CD8-positive, alpha-beta T cell (primary cell): ENCODE measurements at regions of chr17 and their contacts with region 1.

Region 1: DNA sequence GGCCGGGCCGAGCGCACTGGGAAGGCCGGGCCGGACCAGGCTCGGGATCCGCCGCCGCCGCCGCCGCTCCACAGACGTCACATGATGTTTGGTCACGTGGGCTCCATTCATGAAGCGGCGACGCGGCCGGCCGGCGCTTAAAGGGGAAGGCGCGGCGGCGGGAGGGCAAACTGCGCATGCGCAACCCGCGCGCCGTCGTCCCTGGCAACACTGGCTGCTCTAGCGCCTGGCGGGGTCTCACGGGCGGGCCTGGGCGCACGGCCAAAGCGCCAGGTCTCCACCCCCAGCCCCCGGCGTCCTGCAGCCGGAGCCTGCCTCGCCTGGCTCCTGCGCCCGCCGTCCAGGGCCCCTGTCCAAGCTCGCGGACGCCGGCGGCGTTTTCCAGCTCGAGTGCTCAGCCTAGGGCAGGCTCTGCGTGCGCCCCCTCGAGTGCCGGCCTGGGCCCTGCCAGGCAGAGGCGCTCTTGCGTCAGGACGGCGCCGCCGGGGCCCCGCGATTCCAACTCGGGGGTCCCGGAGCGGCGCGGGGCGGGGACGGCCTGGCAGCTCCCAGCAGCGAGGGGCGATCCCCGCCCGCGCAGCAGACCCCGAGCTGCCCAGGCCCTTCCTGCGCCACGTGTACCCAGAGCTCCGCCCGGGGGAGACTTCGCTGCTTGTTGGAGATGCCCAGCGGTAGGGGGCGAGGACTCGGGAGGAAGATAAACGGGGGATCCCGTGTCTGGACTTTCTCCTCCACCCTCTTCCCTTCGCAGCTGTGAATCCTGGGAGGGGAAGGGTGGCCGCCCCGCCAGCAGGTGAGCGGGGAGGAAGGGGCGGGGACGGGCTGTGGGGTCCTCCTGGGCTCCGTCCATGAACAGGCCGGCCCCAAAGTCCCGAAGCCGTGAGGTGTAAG is at the start of gene MAFG:
- DNase-seq: peak; percentile 72 to 96 (median 87)
- ATAC-seq: peak; percentile 69
- H3K4me3 ChIP-seq: peak within 1 kb of the TSS; percentile 43 to 59
- H3K4me3 Mint-ChIP-seq: peak within 1 kb of the TSS; percentile 76
- H3K27ac ChIP-seq: peak within 1 kb of the TSS in 1 of 2 experiments; percentile 36
- H3K27ac Mint-ChIP-seq: peak within 1 kb of the TSS; percentile 60
- H3K4me1 ChIP-seq: peaks cover 28% of the 10 kb centered on the region
- H3K4me1 Mint-ChIP-seq: peaks cover 19% of the 10 kb centered on the region
- H3K27me3 ChIP-seq: peaks cover 0 to 13% of the 10 kb centered on the region in 2 experiments
- H3K27me3 Mint-ChIP-seq: peaks cover 4% of the 10 kb centered on the region
- CTCF ChIP-seq: no peak
- total RNA-seq, gene MAFG: 8.5 to 10.5 TPM

Region 2: DNA sequence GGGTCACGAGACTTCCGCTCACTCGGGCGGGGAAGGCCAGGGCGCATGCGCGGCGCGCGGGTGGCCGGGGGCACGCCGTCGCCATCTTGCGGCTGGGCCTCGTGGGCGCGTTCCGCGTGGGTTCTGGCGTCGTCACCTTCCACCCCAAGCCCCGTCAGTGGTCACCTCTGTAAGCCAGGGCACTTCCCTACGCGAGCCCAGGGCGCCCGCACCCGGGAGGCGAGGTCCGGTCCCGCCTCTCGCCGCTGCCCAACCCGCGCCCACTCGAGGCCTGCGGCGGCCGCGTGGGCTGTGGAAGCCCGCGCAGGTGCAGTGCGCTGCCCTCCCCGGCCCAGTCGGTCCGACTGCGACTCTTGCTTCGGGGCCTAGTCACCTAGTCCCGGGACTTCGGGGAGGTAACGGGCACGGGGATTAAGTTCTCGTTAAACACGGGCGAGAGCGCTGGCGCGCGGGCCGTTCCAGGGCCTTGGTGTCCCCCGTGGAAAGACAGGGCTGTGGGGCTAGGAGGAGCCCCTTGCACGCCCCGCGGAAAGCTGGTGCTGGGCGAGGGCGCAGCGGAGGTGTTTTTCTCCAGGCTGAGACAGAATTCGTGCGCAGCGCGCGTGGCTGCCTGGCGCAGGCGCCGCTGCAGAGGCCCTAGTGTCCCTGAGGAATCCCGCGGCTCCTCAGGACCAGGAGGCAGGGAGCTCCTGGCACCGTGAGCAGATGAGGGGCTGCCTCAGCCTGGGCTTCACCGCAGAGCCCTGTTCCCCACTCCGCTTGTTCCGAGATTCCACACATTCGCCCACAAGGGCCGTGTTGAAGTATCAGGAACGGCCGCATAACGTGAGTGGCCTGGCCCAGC is 56.3 kb before region 1 on chr17:
- CTCF ChIA-PET with region 1: interaction called, 3 read pairs
- POLR2A ChIA-PET with region 1: interaction called, 4 read pairs
- intact Hi-C with region 1: loop called in 1 of 2 experiments (anchors 5 kb)
- DNase-seq: peak; percentile 90 to 97 (median 96)
- ATAC-seq: peak; percentile 29
- H3K4me3 ChIP-seq: peak overlapping the region; percentile 93 to 94
- H3K4me3 Mint-ChIP-seq: peak overlapping the region; percentile 87
- H3K27ac ChIP-seq: peak overlapping the region; percentile 96 to 98
- H3K27ac Mint-ChIP-seq: peak overlapping the region; percentile 96
- H3K4me1 ChIP-seq: peaks cover 39% of the 10 kb centered on the region
- H3K4me1 Mint-ChIP-seq: peaks cover 40% of the 10 kb centered on the region
- H3K27me3 ChIP-seq: no peaks in the 10 kb centered on the region
- H3K27me3 Mint-ChIP-seq: no peaks in the 10 kb centered on the region
- CTCF ChIP-seq: no peak

Region 3: GRCh38 chr17:81890447-81891299 is 37.2 kb before region 1 on chr17:
- CTCF ChIA-PET with region 1: no interaction called
- POLR2A ChIA-PET with region 1: interaction called, 3 read pairs
- intact Hi-C with region 1: loop called (anchors 2 kb)
- DNase-seq: peak in 3 of 9 experiments; percentile 26 to 52 (median 38)
- ATAC-seq: no peak
- H3K4me3 ChIP-seq: peak overlapping the region; percentile 51 to 53
- H3K4me3 Mint-ChIP-seq: peak overlapping the region; percentile 87
- H3K27ac ChIP-seq: peak overlapping the region; percentile 54 to 57
- H3K27ac Mint-ChIP-seq: peak overlapping the region; percentile 95
- H3K4me1 ChIP-seq: peaks cover 19% of the 10 kb centered on the region
- H3K4me1 Mint-ChIP-seq: peaks cover 23% of the 10 kb centered on the region
- H3K27me3 ChIP-seq: no peaks in the 10 kb centered on the region
- H3K27me3 Mint-ChIP-seq: no peaks in the 10 kb centered on the region
- CTCF ChIP-seq: no peak

Region 4: GRCh38 chr17:81911277-81911961 is 16.5 kb before region 1 on chr17 and contains the start of gene PCYT2:
- CTCF ChIA-PET with region 1: no interaction called
- POLR2A ChIA-PET with region 1: interaction called, 3 read pairs
- intact Hi-C with region 1: loop called in 1 of 2 experiments (anchors 1 kb)
- DNase-seq: peak; percentile 85 to 97 (median 94)
- ATAC-seq: peak; percentile 94
- H3K4me3 ChIP-seq: peak within 1 kb of the TSS; percentile 68 to 73
- H3K4me3 Mint-ChIP-seq: peak within 1 kb of the TSS; percentile 85
- H3K27ac ChIP-seq: peak within 1 kb of the TSS; percentile 31 to 37
- H3K27ac Mint-ChIP-seq: peak within 1 kb of the TSS; percentile 55
- H3K4me1 ChIP-seq: peaks cover 18% of the 10 kb centered on the region
- H3K4me1 Mint-ChIP-seq: peaks cover 20% of the 10 kb centered on the region
- H3K27me3 ChIP-seq: no peaks in the 10 kb centered on the region
- H3K27me3 Mint-ChIP-seq: no peaks in the 10 kb centered on the region
- CTCF ChIP-seq: no peak
- total RNA-seq, gene PCYT2: 18.0 to 18.1 TPM

Region 5: DNA sequence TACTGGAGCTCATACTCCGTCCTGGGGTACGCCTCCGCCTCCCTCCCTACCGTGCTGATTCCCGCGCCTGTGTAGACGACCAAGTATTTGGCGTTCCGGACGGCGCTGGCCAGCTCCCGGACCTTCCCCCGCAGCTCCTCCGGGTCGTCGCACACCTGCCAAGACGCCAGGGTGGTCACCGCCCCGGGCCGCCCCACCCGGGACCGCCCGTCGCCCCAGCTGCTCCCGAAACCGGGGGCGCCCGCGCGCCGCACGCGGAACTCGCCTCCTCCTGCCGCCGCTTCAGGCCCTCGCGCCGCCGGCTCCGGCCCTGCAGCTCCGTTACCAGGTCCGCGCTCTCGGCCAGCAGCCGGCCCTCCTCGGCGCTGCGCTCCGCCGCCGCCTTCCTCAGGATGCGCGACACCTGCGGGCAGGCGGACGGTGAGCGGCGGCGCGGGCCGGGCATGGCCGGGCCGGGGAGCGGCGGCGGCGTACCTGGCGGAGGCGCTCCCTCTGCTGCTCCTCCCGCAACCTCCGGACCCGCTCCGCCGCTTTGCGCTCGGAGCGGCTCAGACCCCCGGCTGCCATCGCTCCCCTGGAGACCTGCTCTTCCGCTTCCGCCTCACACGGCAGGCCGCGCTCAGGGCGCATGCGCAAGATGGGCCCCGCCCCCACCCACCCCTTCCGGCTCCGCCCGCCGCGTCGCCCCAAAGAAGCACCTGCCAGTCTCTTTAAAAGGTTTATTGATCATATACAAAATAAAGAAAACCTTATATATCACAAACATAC is 10.1 kb before region 1 on chr17 and contains the start of gene SIRT7:
- CTCF ChIA-PET with region 1: interaction called, 4 read pairs
- POLR2A ChIA-PET with region 1: interaction called, 10 read pairs
- intact Hi-C with region 1: loop called in 1 of 2 experiments (anchors 1 kb)
- DNase-seq: peak; percentile 67 to 92 (median 82)
- ATAC-seq: peak; percentile 93
- H3K4me3 ChIP-seq: peak within 1 kb of the TSS; percentile 63 to 69
- H3K4me3 Mint-ChIP-seq: peak within 1 kb of the TSS; percentile 91
- H3K27ac ChIP-seq: peak within 1 kb of the TSS; percentile 51 to 75
- H3K27ac Mint-ChIP-seq: peak within 1 kb of the TSS; percentile 88
- H3K4me1 ChIP-seq: peaks cover 14% of the 10 kb centered on the region
- H3K4me1 Mint-ChIP-seq: peaks cover 27% of the 10 kb centered on the region
- H3K27me3 ChIP-seq: no peaks in the 10 kb centered on the region
- H3K27me3 Mint-ChIP-seq: no peaks in the 10 kb centered on the region
- CTCF ChIP-seq: no peak
- total RNA-seq, gene SIRT7: 75.2 to 76.1 TPM

Region 6: DNA sequence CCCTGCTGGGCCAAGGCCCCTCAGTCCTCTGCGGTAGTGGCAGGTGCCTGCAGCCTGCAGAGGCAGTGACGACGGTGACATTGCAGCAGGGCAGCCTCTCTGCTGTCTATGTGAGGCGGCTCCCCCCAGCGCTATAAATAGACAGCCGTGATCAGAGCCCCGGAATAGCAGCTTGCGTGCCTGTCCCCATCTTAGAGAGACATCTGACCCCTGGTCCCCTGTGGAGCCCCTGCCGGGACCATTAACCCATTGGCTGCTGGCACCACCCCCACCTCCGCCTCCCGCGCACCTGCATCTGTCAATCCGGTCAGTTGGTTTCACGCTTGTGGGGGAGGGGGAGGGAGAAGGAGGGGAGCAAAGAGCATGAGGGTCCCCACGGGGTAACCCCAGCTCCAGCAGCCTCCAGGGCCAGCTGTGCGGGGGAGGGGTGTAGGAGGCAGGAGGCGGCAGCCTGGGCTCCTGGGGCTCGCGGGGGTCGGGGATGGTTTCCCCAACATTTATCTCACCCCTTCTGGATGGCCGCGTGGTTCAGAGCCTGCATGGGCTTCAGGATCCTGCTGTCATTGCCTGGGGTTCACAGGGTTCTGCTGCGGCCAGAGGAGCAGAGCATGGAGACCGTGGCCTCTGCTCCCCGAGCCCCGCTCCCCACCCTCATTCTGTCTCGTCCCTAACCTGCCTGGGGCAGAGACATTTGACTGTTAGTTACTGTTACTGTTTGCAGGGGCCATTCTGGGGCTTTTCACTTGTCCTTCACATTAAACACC is 14.1 kb after region 1 on chr17:
- CTCF ChIA-PET with region 1: no interaction called
- POLR2A ChIA-PET with region 1: interaction called, 3 read pairs
- intact Hi-C with region 1: loop called in 1 of 2 experiments (anchors 1 kb)
- DNase-seq: no peak
- ATAC-seq: no peak
- H3K4me3 ChIP-seq: no peak overlapping the region
- H3K4me3 Mint-ChIP-seq: no peak overlapping the region
- H3K27ac ChIP-seq: no peak overlapping the region
- H3K27ac Mint-ChIP-seq: no peak overlapping the region
- H3K4me1 ChIP-seq: peaks cover 3% of the 10 kb centered on the region
- H3K4me1 Mint-ChIP-seq: no peaks in the 10 kb centered on the region
- H3K27me3 ChIP-seq: peaks cover 0 to 2% of the 10 kb centered on the region in 2 experiments
- H3K27me3 Mint-ChIP-seq: peaks cover 3% of the 10 kb centered on the region
- CTCF ChIP-seq: no peak

Region 7: GRCh38 chr17:82230627-82231311 is 302.9 kb after region 1 on chr17:
- CTCF ChIA-PET with region 1: no interaction called
- POLR2A ChIA-PET with region 1: no interaction called
- intact Hi-C with region 1: loop called in 1 of 2 experiments (anchors 2 kb)
- DNase-seq: peak in 6 of 9 experiments; percentile 54 to 79 (median 69)
- ATAC-seq: peak; percentile 32
- H3K4me3 ChIP-seq: peak overlapping the region; percentile 39 to 44
- H3K4me3 Mint-ChIP-seq: peak overlapping the region; percentile 82
- H3K27ac ChIP-seq: peak overlapping the region in 1 of 2 experiments; percentile 66
- H3K27ac Mint-ChIP-seq: no peak overlapping the region
- H3K4me1 ChIP-seq: peaks cover 42% of the 10 kb centered on the region
- H3K4me1 Mint-ChIP-seq: peaks cover 14% of the 10 kb centered on the region
- H3K27me3 ChIP-seq: no peaks in the 10 kb centered on the region
- H3K27me3 Mint-ChIP-seq: no peaks in the 10 kb centered on the region
- CTCF ChIP-seq: no peak